B cell (primary cell): ENCODE measurements at regions of chr6 and their contacts with region 1.

Region 1: GRCh38 chr6:30533460-30534294 is 22.6 kb downstream of the GNL1 start:
- DNase-seq: no peak
- ATAC-seq: no peak
- H3K4me3 ChIP-seq: no peak overlapping the region
- H3K4me3 Mint-ChIP-seq: peak overlapping the region; percentile 59
- H3K27ac ChIP-seq: no peak overlapping the region
- H3K27ac Mint-ChIP-seq: peak overlapping the region; percentile 50
- H3K4me1 ChIP-seq: peaks cover 28 to 38% of the 10 kb centered on the region in 2 donors
- H3K4me1 Mint-ChIP-seq: peaks cover 26% of the 10 kb centered on the region
- H3K27me3 ChIP-seq: no peaks in the 10 kb centered on the region
- H3K27me3 Mint-ChIP-seq: no peaks in the 10 kb centered on the region
- CTCF ChIP-seq: no peak

Region 2: DNA sequence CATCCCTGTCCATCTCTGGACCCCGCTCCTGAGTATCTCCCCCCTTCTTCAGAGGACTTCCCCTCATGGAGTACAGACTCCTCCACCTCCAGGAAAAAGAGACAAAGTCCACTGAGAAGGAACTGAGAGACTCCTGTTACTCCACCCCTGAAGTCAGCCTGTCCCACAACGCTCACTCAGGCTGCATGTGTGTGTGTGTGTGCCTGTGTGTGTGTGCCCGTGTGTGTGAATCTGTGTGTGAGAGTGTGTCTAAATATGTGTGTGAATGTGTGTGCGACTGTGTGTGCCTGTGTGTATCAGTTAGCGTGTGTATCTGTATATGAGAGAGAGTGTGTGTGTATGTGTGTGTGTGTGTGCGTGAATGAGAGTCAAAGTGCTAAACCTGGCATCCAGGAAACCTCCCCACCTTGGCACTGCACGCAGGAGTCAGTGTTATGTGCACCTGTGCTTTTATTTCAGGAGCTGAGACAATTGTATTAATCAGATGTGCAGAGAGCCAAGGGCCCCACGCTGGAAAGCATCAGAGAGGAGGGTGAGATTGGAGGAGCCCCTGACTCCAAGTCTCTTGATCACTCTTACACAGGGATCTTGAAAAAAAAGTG is 552.4 kb before region 1 on chr6:
- CTCF ChIA-PET with region 1: no interaction called
- POLR2A ChIA-PET with region 1: no interaction called
- intact Hi-C with region 1: no loop called
- DNase-seq: no peak
- ATAC-seq: no peak
- H3K4me3 ChIP-seq: no peak overlapping the region
- H3K4me3 Mint-ChIP-seq: no peak overlapping the region
- H3K27ac ChIP-seq: no peak overlapping the region
- H3K27ac Mint-ChIP-seq: no peak overlapping the region
- H3K4me1 ChIP-seq: peaks cover 8 to 11% of the 10 kb centered on the region in 2 donors
- H3K4me1 Mint-ChIP-seq: peaks cover 8% of the 10 kb centered on the region
- H3K27me3 ChIP-seq: peaks cover 0 to 26% (median 17%) of the 10 kb centered on the region in 4 experiments
- H3K27me3 Mint-ChIP-seq: peaks cover 18% of the 10 kb centered on the region
- CTCF ChIP-seq: no peak

Region 3: DNA sequence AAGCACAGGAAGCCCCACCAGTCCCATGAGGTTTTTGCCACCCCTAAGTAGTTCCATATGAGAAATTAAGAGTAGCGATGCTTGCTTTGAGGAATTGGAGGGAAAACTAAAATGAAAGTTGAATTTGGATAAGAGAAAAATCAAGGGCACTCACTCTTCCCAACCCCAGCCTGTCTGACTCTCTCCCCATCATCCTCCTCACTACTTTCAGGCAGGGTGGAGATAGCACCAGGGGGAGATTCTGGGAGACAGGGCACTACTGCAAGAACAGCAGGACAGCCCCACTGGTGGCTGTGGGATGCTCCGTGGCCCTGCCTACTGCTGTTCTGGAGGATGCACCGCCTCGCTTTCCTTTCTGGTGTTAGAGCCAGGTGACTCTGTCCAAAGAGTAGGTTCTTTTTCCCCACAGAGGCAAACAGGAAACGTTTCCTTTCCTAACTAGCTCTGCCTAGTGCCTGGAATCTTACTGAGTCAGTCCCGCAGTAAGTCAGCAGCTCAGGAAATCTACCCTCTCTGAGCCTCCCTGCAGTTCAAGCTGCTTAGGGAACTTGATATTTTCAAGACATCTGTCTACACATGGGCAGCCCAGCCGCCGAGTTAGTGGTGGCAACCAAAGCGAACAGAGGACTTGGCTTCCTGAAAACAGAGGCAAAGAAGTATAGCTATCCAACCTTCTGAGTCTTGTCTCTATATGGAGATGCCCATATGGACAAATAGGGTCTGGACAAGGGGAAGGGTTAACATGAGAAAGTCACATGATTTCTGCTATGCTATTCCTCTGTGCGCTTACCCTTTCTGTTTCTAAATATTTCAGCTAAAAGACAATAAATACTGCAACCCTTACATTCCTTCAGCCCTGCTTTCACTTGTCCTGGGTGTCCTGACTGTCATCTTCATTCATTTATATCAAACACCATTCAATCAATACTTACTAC is 33.0 kb before region 1 on chr6:
- CTCF ChIA-PET with region 1: interaction called, 114 read pairs
- POLR2A ChIA-PET with region 1: interaction called, 126 read pairs
- intact Hi-C with region 1: no loop called
- DNase-seq: peak; percentile 49
- ATAC-seq: peak; percentile 52
- H3K4me3 ChIP-seq: peak overlapping the region in 3 of 5 experiments; percentile 22 to 55 (median 27)
- H3K4me3 Mint-ChIP-seq: peak overlapping the region; percentile 77
- H3K27ac ChIP-seq: peak overlapping the region in 1 of 2 donors; percentile 48
- H3K27ac Mint-ChIP-seq: peak overlapping the region; percentile 58
- H3K4me1 ChIP-seq: peaks cover 25 to 38% of the 10 kb centered on the region in 2 donors
- H3K4me1 Mint-ChIP-seq: peaks cover 46% of the 10 kb centered on the region
- H3K27me3 ChIP-seq: no peaks in the 10 kb centered on the region
- H3K27me3 Mint-ChIP-seq: no peaks in the 10 kb centered on the region
- CTCF ChIP-seq: no peak

Region 4: DNA sequence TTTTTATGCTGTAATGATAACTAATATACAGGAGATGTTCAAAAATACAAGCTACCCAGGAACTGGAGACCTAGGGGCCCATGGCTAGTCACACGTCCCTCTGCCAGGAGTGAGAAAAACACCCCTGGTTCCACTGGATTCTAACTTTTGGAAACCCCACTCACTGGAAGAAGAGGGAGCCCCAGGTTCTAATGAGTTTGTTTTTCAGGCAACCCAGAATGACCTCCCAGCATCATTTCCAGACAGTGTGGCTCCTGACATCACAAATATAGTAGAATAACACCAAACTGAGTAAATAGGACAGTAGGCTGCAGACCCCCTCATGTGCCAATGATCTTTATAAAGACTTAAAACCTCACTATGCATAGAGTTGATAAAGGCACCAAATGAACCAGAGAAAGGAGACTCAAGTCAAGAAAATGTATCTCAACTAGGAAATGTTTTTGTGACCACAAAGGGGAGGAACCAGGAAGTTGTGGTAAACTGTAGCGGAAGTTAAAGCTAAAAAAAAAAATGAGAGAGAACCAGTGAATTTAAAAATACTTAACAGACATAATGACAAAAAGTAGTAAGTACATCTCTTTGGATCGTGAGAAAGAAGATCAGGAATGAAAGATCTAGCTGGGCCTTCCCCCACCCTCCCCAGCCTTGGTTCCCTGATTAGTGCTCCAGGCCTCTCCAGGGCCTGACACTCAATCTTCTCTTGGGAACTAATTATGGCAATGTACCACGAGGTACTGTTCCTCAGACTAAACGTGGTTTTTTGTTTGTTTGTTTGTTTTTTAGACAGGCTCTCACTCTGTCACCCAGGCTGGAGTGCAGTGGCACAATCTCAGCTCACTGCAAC is 24.6 kb before region 1 on chr6:
- CTCF ChIA-PET with region 1: interaction called, 140 read pairs
- POLR2A ChIA-PET with region 1: interaction called, 17 read pairs
- intact Hi-C with region 1: loop called (anchors 2 kb)
- DNase-seq: peak; percentile 84
- ATAC-seq: peak; percentile 62
- H3K4me3 ChIP-seq: peak overlapping the region; percentile 20 to 74 (median 46)
- H3K4me3 Mint-ChIP-seq: peak overlapping the region; percentile 68
- H3K27ac ChIP-seq: peak overlapping the region; percentile 73 to 74
- H3K27ac Mint-ChIP-seq: peak overlapping the region; percentile 84
- H3K4me1 ChIP-seq: peaks cover 76 to 83% of the 10 kb centered on the region in 2 donors
- H3K4me1 Mint-ChIP-seq: peaks cover 67% of the 10 kb centered on the region
- H3K27me3 ChIP-seq: no peaks in the 10 kb centered on the region
- H3K27me3 Mint-ChIP-seq: no peaks in the 10 kb centered on the region
- CTCF ChIP-seq: no peak

Region 5: DNA sequence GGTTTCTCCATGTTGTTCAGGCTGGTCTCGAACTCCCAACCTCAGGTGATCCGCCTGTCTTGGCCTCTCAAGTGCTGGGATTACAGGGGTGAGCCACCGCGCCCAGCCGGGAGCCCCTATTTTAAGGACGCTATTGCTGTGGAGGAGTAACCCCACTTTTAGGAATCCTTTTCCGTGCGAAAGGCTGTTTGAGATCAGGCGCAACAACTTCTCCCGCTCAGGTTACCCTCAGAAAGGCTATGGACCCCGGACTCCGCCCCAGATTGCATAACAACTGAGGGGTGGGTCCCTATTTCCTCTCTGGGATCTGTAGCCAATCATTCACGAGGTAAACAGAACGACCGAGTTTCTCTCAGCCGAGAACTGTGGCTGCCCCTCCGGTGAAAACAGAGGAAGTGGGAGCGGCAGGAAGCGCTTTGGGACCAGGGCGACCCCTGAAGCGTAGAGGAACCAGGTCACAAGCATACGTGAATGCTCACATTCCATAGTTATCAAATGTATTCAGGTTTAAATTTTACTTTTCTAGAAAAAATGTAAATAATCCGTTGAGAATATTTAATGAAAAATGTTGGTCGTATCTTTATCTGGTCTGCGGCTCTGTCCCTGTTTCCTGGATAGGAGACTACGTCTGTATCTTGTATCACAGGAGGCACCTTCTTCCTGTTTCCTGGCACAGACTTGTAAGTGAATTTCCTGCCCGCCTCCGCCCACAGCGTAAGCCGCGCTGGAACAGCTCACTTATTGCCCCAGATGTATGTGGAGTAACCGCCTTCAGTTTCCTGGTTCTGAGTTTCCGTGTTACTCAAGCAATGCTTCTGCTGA is 17.5 kb before region 1 on chr6:
- CTCF ChIA-PET with region 1: interaction called, 140 read pairs
- POLR2A ChIA-PET with region 1: interaction called, 28 read pairs
- intact Hi-C with region 1: loop called (anchors 1 kb)
- DNase-seq: peak; percentile 95
- ATAC-seq: peak; percentile 85
- H3K4me3 ChIP-seq: peak overlapping the region; percentile 31 to 73 (median 58)
- H3K4me3 Mint-ChIP-seq: peak overlapping the region; percentile 90
- H3K27ac ChIP-seq: peak overlapping the region; percentile 88 to 99
- H3K27ac Mint-ChIP-seq: peak overlapping the region; percentile 99
- H3K4me1 ChIP-seq: peaks cover 34 to 66% of the 10 kb centered on the region in 2 donors
- H3K4me1 Mint-ChIP-seq: peaks cover 60% of the 10 kb centered on the region
- H3K27me3 ChIP-seq: no peaks in the 10 kb centered on the region
- H3K27me3 Mint-ChIP-seq: no peaks in the 10 kb centered on the region
- CTCF ChIP-seq: no peak